Transverse colon (tissue), 4 donors: ENCODE measurements at regions of chr12 and their contacts with region 1.

Region 1: DNA sequence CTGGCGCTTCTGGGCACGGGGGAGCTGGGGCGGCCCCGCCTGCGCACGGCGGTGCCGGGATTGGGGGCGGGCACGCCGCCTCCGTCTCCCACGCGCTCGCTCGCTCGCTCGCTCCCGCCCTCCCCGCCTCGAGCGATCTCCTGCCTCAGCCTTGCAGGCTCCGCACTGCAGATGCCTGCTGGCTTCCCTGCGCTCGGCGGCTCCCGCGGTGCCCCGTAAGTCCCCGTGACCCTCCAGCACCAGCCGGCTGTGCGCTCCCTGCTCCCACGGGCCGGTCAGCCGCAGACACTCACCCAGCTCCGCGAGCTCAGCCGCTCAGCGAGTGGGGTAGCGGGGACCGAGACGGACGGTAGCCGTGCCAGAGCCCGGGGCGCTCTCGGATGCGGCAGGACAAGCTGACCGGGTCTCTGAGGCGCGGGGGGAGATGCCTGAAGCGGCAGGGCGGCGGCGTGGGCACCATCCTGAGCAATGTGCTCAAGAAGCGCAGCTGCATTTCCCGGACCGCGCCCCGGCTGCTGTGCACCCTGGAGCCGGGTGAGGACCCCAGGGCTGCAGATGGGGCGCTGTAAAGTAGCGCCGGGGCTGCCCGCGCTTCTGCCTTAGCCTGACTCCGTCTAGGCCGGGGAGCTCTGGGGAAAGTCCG is at the start of gene TBC1D30:
- DNase-seq: no peak
- H3K4me3 ChIP-seq: peak within 1 kb of the TSS; percentile 0 to 61 (median 29)
- H3K27ac ChIP-seq: no peak within 1 kb of the TSS
- H3K4me1 ChIP-seq: peaks cover 17 to 44% (median 29%) of the 10 kb centered on the region in 4 donors
- H3K27me3 ChIP-seq: peaks cover 73% of the 10 kb centered on the region
- CTCF ChIP-seq: no peak
- EP300 ChIP-seq: no peak
- POLR2A ChIP-seq: no peak
- total RNA-seq, gene TBC1D30: 0.37 to 9.4 (median 6.5) TPM

Region 2: DNA sequence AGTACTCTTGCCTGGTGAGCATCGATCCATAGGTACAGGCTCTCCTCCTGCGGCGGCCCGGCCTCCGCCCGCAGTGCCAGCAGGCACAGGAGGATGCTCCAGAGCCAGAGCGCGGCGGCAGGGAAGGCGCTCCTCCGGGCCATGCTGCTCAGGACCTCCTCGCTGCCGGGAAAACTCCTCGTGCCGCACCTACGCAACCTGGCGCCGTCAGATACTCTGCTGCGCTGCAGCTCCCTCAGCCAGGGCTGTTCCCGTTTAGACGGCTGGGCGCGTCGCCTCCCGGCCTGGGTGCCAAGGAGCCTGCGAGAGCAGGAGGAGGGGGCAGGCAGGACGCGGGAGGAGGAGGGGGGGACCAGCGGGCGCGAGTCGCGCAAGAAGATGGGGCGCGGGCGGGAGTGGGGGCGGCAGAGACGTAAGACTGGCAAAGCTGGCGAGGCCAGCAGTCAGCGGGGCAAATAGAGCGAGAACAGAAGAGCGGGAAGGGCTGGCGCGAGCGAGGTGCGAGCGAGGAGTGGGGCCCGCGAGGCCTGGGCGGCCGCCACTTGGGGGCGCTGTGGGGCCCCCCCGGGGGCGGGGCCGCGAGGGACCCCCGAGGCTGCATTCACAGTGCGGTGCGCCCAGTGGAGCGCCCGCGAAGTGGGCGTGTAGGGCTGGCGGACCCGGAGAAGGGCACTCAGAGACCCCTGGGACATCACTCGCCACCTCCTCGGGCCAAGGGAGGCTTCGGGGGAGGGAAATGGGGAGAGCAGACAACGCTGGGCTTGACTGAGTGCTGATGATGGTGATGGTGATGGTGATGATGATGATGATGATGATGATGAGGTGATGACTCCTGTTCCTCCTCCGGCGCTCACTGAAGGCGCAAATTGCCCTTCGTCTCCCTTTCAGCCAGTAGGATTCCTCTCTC is 296.7 kb after region 1 on chr12 and contains the start of gene WIF1:
- in situ Hi-C with region 1: loop called in 1 of 4 experiments (anchors 25 kb)
- intact Hi-C with region 1: no loop called
- DNase-seq: peak; percentile 19
- H3K4me3 ChIP-seq: peak within 1 kb of the TSS in 2 of 4 donors; percentile 13 to 43
- H3K27ac ChIP-seq: no peak within 1 kb of the TSS
- H3K4me1 ChIP-seq: peaks cover 3 to 16% (median 7%) of the 10 kb centered on the region in 4 donors
- H3K27me3 ChIP-seq: peaks cover 89% of the 10 kb centered on the region
- CTCF ChIP-seq: peak in 1 of 5 experiments; percentile 12
- EP300 ChIP-seq: no peak
- POLR2A ChIP-seq: no peak
- total RNA-seq, gene WIF1: not detected

Region 3: DNA sequence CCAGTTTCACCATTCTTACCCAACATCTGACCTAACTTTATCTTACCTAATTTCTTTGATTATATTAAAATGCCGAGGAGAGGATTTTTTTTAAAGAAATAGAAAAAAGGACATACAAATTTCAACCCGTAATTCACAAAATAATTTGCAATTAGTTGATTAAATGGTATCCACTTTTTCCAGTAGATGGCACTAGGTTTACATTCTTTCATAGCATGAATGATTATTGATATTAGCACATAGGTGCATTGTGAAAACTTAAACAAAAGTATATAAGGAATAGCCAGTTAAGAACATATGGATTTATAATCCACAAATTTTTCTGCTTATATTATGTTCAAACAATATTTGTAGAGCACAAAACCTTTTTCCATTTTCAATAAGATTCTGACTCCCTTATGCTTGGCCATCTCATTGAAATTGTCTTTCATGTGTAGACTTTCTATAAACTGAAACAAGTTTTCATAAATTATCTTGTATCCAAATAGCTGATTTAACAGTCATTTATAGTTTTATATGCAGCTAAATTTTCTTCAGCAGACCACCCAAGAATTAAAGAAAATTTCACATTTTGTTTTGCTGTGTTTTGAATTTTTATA is 489.2 kb after region 1 on chr12:
- in situ Hi-C with region 1: no loop called
- intact Hi-C with region 1: no loop called
- DNase-seq: no peak
- H3K4me3 ChIP-seq: no peak overlapping the region
- H3K27ac ChIP-seq: no peak overlapping the region
- H3K4me1 ChIP-seq: peaks cover 0 to under 1% (median 0%) of the 10 kb centered on the region in 4 donors
- H3K27me3 ChIP-seq: no peaks in the 10 kb centered on the region
- CTCF ChIP-seq: peak in 2 of 5 experiments; percentile 14 to 23
- EP300 ChIP-seq: no peak
- POLR2A ChIP-seq: no peak